ENCODE measurements at regions of chr6 and their contacts with region 1.

Region 1: GRCh38 chr6:159742165-159742564 is 14.9 kb downstream of the WTAP start:
- DNase-seq: no peak
- ATAC-seq: peak in 1 of 2 donors; percentile 36
- H3K4me3 ChIP-seq: no peak overlapping the region
- H3K27ac ChIP-seq: peak overlapping the region in 3 of 4 donors; percentile 7 to 42 (median 38)
- H3K4me1 ChIP-seq: peaks cover 0 to 13% of the 10 kb centered on the region in 2 donors
- H3K27me3 ChIP-seq: no peaks in the 10 kb centered on the region
- CTCF ChIP-seq: no peak
- POLR2A ChIP-seq: no peak

Region 2: DNA sequence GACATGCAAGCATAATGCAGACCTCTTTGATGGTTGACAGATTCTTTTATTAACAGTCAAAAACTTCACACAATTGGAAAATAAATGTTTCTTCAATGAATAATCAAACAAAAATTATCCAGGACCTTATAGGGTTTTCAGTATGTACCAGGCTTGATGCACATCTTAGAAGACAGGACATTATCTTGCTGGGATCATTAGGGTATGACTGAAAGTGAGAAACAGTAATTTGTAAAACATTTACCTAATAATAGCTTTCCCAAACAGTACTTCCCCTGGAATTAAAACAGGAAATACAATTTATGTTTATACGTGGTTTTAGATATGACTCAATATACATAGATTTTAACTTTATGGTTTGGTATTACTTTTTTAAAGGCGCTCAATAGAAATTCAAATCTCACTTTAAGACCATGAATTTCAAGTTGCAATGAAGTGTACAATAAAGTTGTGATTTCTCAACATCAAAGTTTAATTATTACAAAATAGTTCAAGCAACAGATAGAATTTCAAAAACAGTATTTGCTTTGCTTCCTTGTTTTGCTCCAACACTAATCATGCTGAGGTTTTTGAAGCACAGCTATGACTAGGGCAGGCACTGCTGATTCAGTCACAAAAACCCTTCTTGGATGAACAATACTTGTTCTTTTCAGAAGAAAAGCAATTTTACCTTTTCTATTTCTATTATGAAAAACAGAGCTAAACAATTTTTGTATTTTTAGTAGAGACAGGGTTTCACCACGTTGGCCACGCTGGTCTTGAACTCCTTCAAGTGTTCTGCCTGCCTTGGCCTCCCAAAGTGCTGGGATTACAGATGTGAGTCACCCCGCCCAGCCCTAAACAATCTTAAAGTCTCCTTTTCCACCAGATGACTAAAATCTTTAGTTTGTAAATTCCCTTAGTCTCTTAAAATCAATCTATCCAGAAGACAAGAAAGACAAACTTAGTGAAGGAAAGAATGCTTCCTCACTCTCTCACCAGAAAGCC is 62.8 kb before region 1 on chr6:
- in situ Hi-C with region 1: loop called (anchors 10 kb)
- intact Hi-C with region 1: no loop called
- DNase-seq: no peak
- ATAC-seq: no peak
- H3K4me3 ChIP-seq: no peak overlapping the region
- H3K27ac ChIP-seq: peak overlapping the region; percentile 3 to 50 (median 46)
- H3K4me1 ChIP-seq: peaks cover 15 to 28% of the 10 kb centered on the region in 2 donors
- H3K27me3 ChIP-seq: no peaks in the 10 kb centered on the region
- CTCF ChIP-seq: no peak
- POLR2A ChIP-seq: no peak

Region 3: GRCh38 chr6:159761873-159762680 is 19.9 kb after region 1 on chr6 and contains the start of gene ACAT2:
- in situ Hi-C with region 1: no loop called
- intact Hi-C with region 1: loop called (anchors 2 kb)
- DNase-seq: peak; percentile 95 to 96
- ATAC-seq: peak; percentile 98 to 99
- H3K4me3 ChIP-seq: peak within 1 kb of the TSS; percentile 84 to 90 (median 88)
- H3K27ac ChIP-seq: peak within 1 kb of the TSS; percentile 96 to 99 (median 96)
- H3K4me1 ChIP-seq: peaks cover 13 to 19% of the 10 kb centered on the region in 2 donors
- H3K27me3 ChIP-seq: no peaks in the 10 kb centered on the region
- CTCF ChIP-seq: peak in 2 of 5 experiments; percentile 8 to 40
- POLR2A ChIP-seq: peak; percentile 47 to 68
- total RNA-seq, gene ACAT2: 0.59 to 4.6 (median 2.4) TPM

Region 4: GRCh38 chr6:159829526-159829925 is 87.4 kb after region 1 on chr6:
- in situ Hi-C with region 1: no loop called
- intact Hi-C with region 1: no loop called
- DNase-seq: no peak
- ATAC-seq: no peak
- H3K4me3 ChIP-seq: no peak overlapping the region
- H3K27ac ChIP-seq: no peak overlapping the region
- H3K4me1 ChIP-seq: peaks cover 0 to 10% of the 10 kb centered on the region in 2 donors
- H3K27me3 ChIP-seq: no peaks in the 10 kb centered on the region
- CTCF ChIP-seq: no peak
- POLR2A ChIP-seq: no peak

Region 5: GRCh38 chr6:161152907-161153662 is 1410.9 kb after region 1 on chr6:
- in situ Hi-C with region 1: no loop called
- intact Hi-C with region 1: no loop called
- DNase-seq: no peak
- ATAC-seq: no peak
- H3K4me3 ChIP-seq: no peak overlapping the region
- H3K27ac ChIP-seq: no peak overlapping the region
- H3K4me1 ChIP-seq: no peaks in the 10 kb centered on the region
- H3K27me3 ChIP-seq: no peaks in the 10 kb centered on the region
- CTCF ChIP-seq: no peak
- POLR2A ChIP-seq: no peak

Measured in gastrocnemius medialis (tissue), 4 donors.